ENCODE measurements at regions of chr7 and their contacts with region 1.

Region 1: GRCh38 chr7:117212969-117213877 is 109.6 kb downstream of the WNT2 start:
- DNase-seq: peak; percentile 66
- H3K4me3 ChIP-seq: no peak overlapping the region
- H3K27ac ChIP-seq: no peak overlapping the region
- H3K4me1 ChIP-seq: peaks cover 0 to 7% of the 10 kb centered on the region in 2 experiments; a peak in 2 of 4 replicates
- H3K27me3 ChIP-seq: no peaks in the 10 kb centered on the region
- CTCF ChIP-seq: peak; percentile 99
- EP300 ChIP-seq: no peak
- RAD21 ChIP-seq: peak; percentile 82

Region 2: DNA sequence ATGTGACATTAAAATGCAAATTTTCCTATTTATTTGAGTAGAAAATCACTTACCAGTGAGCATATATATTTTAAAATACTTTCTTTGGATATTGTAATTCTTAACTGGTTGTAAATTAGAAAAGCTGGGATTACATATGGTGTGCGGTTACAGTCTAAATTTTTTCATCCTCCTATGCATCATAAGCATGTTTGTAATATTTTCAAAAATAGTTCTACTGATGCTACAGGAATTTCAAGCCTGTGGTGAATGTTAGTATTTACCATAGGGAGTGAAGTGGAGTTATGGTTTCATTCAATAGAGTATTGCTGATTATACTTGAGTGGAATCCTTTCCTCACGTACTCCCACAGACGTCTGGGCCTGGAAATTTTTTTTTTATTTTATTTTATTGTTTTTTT is 294.5 kb before region 1 on chr7:
- CTCF ChIA-PET with region 1: no interaction called
- POLR2A ChIA-PET with region 1: no interaction called
- DNase-seq: no peak
- H3K4me3 ChIP-seq: no peak overlapping the region
- H3K27ac ChIP-seq: no peak overlapping the region
- H3K4me1 ChIP-seq: no peaks in the 10 kb centered on the region
- H3K27me3 ChIP-seq: no peaks in the 10 kb centered on the region
- CTCF ChIP-seq: no peak
- EP300 ChIP-seq: no peak
- RAD21 ChIP-seq: no peak

Region 3: DNA sequence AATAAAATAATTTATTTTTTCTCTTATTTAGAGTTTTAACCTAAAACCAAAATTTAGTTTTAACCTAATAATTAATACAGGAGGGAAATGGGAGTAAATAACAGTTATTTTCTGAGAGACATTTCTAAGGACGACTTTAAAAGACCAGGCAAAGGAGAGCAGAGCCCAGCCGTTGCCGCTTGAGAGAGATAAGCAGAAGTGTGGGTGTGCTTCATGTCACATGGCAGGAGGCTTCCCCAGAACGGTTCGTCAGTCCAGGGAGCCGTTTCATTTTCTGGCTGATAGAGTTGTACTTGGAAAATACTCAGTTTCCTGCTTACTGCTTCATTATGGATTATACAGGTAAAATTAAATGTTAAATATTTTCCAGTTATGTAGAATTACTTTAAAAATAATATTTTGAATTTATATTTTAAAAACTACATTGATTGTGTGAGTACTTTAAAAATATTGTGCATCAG is 198.5 kb before region 1 on chr7:
- CTCF ChIA-PET with region 1: no interaction called
- POLR2A ChIA-PET with region 1: no interaction called
- DNase-seq: peak; percentile 66
- H3K4me3 ChIP-seq: peak overlapping the region; percentile 28 to 34; a peak in 3 of 4 replicates
- H3K27ac ChIP-seq: peak overlapping the region; percentile 30 to 79
- H3K4me1 ChIP-seq: peaks cover 20 to 23% of the 10 kb centered on the region in 2 experiments; a peak in 3 of 4 replicates
- H3K27me3 ChIP-seq: no peaks in the 10 kb centered on the region
- CTCF ChIP-seq: no peak
- EP300 ChIP-seq: peak in 1 of 2 experiments; percentile 27; a peak in 1 of 4 replicates
- RAD21 ChIP-seq: 0 out of 2 replicates have a peak, but pooled peaks have one; percentile 3

Region 4: GRCh38 chr7:117202511-117202910 is 10.7 kb before region 1 on chr7:
- CTCF ChIA-PET with region 1: interaction called, 18 read pairs
- POLR2A ChIA-PET with region 1: no interaction called
- DNase-seq: no peak
- H3K4me3 ChIP-seq: no peak overlapping the region
- H3K27ac ChIP-seq: no peak overlapping the region
- H3K4me1 ChIP-seq: no peaks in the 10 kb centered on the region
- H3K27me3 ChIP-seq: no peaks in the 10 kb centered on the region
- CTCF ChIP-seq: no peak
- EP300 ChIP-seq: no peak
- RAD21 ChIP-seq: no peak

Region 5: GRCh38 chr7:117227091-117227490 is 13.9 kb after region 1 on chr7:
- CTCF ChIA-PET with region 1: interaction called, 29 read pairs
- POLR2A ChIA-PET with region 1: no interaction called
- DNase-seq: no peak
- H3K4me3 ChIP-seq: no peak overlapping the region
- H3K27ac ChIP-seq: no peak overlapping the region
- H3K4me1 ChIP-seq: peaks cover 2 to 6% of the 10 kb centered on the region in 2 experiments; a peak in 2 of 4 replicates
- H3K27me3 ChIP-seq: no peaks in the 10 kb centered on the region
- CTCF ChIP-seq: no peak
- EP300 ChIP-seq: no peak
- RAD21 ChIP-seq: no peak

Region 6: GRCh38 chr7:117385340-117386109 is 172.3 kb after region 1 on chr7:
- CTCF ChIA-PET with region 1: interaction called, 13 read pairs
- POLR2A ChIA-PET with region 1: no interaction called
- DNase-seq: peak; percentile 5
- H3K4me3 ChIP-seq: no peak overlapping the region
- H3K27ac ChIP-seq: no peak overlapping the region
- H3K4me1 ChIP-seq: no peaks in the 10 kb centered on the region; a peak in 1 of 4 replicates
- H3K27me3 ChIP-seq: peaks cover 7% of the 10 kb centered on the region; the same call in 1 of the 2 replicates
- CTCF ChIP-seq: peak; percentile 79
- EP300 ChIP-seq: no peak
- RAD21 ChIP-seq: peak; percentile 76